ENCODE measurements at regions of chr17 and their contacts with region 1.

Region 1: DNA sequence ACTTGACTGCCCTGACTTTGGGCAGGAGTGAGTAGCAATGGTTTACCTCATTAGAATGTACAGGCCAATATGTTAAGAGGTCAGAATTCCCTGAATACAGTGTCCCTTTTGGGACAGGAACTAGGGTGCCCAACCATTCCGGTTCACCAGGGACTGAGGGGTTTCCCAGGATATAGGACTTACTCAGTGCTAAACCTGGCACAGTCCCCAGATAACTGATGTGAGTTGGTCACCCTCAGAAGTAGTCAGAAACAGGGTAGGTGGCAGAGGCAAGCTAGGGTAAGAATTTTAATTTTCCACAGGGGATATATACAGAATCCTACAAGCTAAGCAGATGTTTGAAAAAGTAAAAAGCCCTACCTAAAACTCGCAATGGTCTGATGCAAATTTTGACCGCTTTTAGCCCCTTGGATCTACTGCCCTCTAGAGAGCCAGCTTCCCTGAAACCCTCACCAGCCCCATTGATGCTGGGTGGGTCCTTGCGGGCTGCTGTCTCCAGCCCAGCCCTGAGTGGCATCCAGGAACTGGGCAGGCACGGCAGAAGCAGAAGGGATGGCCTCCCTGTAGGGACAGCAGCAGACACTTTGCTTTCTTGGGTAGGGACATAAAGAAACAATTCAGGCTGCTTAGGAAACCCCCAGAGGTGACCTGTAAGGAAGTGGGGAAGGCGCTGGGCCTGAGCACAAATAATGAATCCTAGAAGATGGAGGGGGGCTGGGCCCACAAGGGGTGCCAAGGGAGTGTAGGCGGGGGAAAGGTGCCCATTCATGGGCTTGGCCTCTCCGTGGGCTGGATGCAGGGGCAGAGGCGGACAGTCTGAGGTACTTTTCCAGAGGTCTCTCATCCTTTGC is 434.8 kb downstream of the SLC39A11 start:
- DNase-seq: no peak
- H3K4me3 ChIP-seq: no peak overlapping the region
- H3K27ac ChIP-seq: no peak overlapping the region
- H3K4me1 ChIP-seq: no peaks in the 10 kb centered on the region
- H3K27me3 ChIP-seq: no peaks in the 10 kb centered on the region
- CTCF ChIP-seq: peak in 2 of 5 experiments; percentile 9 to 16
- EP300 ChIP-seq: no peak
- POLR2A ChIP-seq: no peak

Region 2: DNA sequence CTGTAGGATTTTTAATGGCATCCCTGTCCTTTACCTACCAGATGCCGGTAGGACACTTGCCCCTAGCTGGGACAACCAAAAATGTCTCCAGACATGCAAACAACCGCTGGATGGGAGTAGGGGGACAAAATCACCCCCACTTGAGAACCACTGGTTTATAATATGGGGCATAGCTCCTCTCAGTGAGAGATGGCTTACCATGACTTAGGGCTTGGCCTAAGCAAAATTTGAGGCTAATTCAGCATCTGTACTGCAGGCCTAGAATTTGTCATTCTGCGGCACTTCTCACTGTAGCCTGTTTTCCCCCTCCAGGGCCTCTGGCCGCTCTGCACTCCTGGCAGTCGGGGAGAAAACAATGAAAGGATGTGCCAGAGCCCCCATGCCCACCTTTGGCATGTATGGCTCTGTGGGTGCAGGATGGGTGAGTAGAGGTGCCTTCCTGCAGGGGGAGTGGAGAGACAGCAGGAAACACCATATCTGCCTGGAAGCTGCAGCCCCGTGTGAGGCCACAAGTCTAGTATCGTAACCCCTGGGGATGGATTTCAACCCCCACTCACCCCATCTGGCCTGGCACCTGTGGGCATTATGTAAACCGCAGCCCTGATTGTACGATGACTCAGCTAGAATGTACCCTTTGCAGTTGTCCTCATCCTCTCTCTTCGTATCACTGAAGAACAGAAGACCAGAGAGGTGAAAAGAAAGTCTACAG is 268.8 kb before region 1 on chr17:
- in situ Hi-C with region 1: no loop called
- intact Hi-C with region 1: no loop called
- DNase-seq: no peak
- H3K4me3 ChIP-seq: no peak overlapping the region
- H3K27ac ChIP-seq: no peak overlapping the region
- H3K4me1 ChIP-seq: no peaks in the 10 kb centered on the region
- H3K27me3 ChIP-seq: no peaks in the 10 kb centered on the region
- CTCF ChIP-seq: no peak
- EP300 ChIP-seq: no peak
- POLR2A ChIP-seq: no peak

Region 3: GRCh38 chr17:72576289-72576759 is 81.4 kb before region 1 on chr17:
- in situ Hi-C with region 1: loop called in 2 of 4 experiments (anchors 10 kb)
- intact Hi-C with region 1: no loop called
- DNase-seq: no peak
- H3K4me3 ChIP-seq: no peak overlapping the region
- H3K27ac ChIP-seq: no peak overlapping the region
- H3K4me1 ChIP-seq: peaks cover 0 to 6% (median 2%) of the 10 kb centered on the region in 4 donors
- H3K27me3 ChIP-seq: no peaks in the 10 kb centered on the region
- CTCF ChIP-seq: no peak
- EP300 ChIP-seq: no peak
- POLR2A ChIP-seq: no peak

Region 4: DNA sequence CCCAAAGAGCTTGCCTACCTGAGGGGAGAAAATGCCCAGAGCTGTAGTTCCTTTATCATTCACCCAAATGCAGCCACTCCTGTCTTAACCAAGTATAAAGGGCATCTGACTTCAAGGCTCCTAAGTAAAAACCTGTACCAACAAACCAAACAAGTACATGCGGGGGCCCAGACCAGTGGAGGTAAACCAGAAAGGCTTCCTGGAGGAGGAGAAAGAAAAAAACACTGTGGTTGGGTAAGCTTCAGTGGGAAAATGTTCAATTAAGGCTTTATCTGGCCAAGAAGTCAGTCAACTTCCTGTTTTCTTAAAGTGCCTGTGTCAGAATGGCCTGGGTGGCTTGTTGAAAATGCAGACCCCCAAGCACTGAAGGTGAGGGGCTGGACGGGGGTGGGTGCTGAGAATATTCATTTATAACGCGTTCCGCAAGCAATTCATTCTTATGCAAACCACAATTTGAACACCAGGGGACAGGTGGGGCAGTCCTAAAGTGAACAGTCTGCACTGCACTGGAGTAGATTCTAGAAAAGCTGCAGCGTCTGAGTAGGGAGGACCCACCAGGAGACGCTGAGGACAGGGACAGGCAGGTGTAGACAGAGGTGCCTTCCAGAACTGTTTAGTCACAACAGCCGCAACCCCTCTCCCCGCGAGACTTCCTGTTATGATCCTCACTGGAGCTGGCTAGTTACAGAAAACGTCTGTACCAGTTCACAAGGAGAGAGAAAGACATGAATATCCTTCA is 69.8 kb before region 1 on chr17:
- in situ Hi-C with region 1: loop called in 1 of 4 experiments (anchors 10 kb)
- intact Hi-C with region 1: no loop called
- DNase-seq: peak; percentile 49
- H3K4me3 ChIP-seq: peak overlapping the region in 2 of 4 donors; percentile 1 to 71
- H3K27ac ChIP-seq: peak overlapping the region; percentile 75 to 90 (median 84)
- H3K4me1 ChIP-seq: peaks cover 0 to 23% (median 17%) of the 10 kb centered on the region in 4 donors
- H3K27me3 ChIP-seq: peaks cover 19% of the 10 kb centered on the region
- CTCF ChIP-seq: peak in 4 of 5 experiments; percentile 8 to 50 (median 23)
- EP300 ChIP-seq: no peak
- POLR2A ChIP-seq: peak; percentile 17